SK-N-SH (cell line): ENCODE measurements at regions of chr11 and their contacts with region 1.

Region 1: GRCh38 chr11:62841361-62842184 is 2.2 kb upstream of the WDR74 start:
- DNase-seq: peak; percentile 87
- H3K4me3 ChIP-seq: peak overlapping the region; percentile 59 to 81
- H3K27ac ChIP-seq: peak overlapping the region; percentile 94 to 95
- H3K4me1 ChIP-seq: peaks cover 13 to 15% of the 10 kb centered on the region in 2 experiments; a peak in 2 of 4 replicates
- H3K27me3 ChIP-seq: no peaks in the 10 kb centered on the region
- CTCF ChIP-seq: no peak
- EP300 ChIP-seq: peak; percentile 72 to 76; a peak in 3 of 4 replicates
- RAD21 ChIP-seq: no peak

Region 2: DNA sequence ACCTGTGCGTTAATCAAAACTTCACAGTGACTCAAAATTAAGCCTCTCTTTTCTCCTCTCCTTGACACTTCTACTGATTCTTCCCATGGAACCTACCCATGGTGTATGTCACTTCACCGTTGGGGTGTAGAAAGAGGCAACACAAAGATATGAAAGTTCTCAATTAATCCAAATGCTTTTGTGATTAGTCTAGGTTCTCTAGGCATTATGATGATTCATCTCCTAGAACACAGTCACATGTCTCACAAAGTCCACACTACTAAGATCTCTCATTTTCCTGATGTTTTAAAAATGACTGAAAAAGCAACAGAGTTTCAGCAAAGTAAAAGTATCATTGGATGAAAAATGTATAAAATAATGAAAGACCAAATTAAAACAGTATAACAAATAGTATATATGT is 585.3 kb before region 1 on chr11:
- CTCF ChIA-PET with region 1: no interaction called
- POLR2A ChIA-PET with region 1: no interaction called
- DNase-seq: no peak
- H3K4me3 ChIP-seq: no peak overlapping the region
- H3K27ac ChIP-seq: no peak overlapping the region
- H3K4me1 ChIP-seq: no peaks in the 10 kb centered on the region
- H3K27me3 ChIP-seq: no peaks in the 10 kb centered on the region; the same call in 1 of the 2 replicates
- CTCF ChIP-seq: no peak
- EP300 ChIP-seq: no peak
- RAD21 ChIP-seq: no peak

Region 3: DNA sequence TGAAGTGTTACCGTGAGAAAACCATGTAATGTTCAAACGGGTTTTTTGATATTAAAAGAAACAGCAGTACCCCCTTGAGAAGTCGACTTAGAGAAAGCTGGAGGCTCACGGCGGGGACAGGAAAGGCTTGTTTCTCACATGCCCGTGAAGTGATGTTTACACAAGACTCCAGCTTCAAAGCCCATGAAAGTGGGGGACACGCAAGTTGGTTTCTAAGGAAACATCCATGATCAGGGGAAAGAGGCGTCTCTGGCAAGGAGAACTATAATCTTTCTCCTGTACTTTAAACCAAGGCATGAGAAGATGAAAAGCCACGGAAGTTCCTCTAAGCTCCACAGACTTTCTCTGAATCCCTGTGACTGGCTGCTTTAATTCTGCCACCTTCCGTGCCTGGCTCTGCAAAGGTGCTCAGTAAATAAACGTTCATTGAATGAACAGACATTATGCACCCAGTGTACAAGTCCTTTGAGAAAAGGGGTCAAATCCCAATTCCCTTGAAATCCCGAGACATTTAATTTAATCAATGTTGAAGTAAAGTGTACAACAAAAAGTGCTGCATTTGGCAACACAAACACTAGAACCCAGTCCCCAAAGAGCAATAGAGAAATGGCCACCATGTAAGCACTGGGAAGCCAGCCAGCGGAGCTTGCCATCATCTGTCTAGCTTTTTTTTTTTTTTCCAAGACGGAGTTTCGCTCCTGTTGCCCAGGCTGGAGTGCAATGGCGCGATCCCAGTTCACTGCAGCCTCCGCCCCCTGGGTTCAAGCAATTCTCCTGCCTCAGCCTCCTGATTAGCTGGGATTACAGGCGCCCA is 353.6 kb before region 1 on chr11:
- CTCF ChIA-PET with region 1: no interaction called
- POLR2A ChIA-PET with region 1: no interaction called
- DNase-seq: no peak
- H3K4me3 ChIP-seq: no peak overlapping the region
- H3K27ac ChIP-seq: no peak overlapping the region
- H3K4me1 ChIP-seq: no peaks in the 10 kb centered on the region
- H3K27me3 ChIP-seq: no peaks in the 10 kb centered on the region
- CTCF ChIP-seq: no peak
- EP300 ChIP-seq: no peak
- RAD21 ChIP-seq: no peak

Region 4: GRCh38 chr11:62591448-62592145 is 250.0 kb before region 1 on chr11 and contains the start of gene TUT1:
- CTCF ChIA-PET with region 1: no interaction called
- POLR2A ChIA-PET with region 1: interaction called, 13 read pairs
- DNase-seq: peak; percentile 83
- H3K4me3 ChIP-seq: peak within 1 kb of the TSS; percentile 77 to 78
- H3K27ac ChIP-seq: peak within 1 kb of the TSS; percentile 86 to 94
- H3K4me1 ChIP-seq: peaks cover 13 to 17% of the 10 kb centered on the region in 2 experiments; a peak in 3 of 4 replicates
- H3K27me3 ChIP-seq: no peaks in the 10 kb centered on the region
- CTCF ChIP-seq: no peak; the same call in 1 of the 2 replicates
- EP300 ChIP-seq: 0 out of 4 replicates have a peak, but pooled peaks of 1 of the 2 experiments have one; percentile 22
- RAD21 ChIP-seq: no peak
- polyA plus RNA-seq, gene TUT1: 27.3 and 30.0 TPM in 2 replicates

Region 5: DNA sequence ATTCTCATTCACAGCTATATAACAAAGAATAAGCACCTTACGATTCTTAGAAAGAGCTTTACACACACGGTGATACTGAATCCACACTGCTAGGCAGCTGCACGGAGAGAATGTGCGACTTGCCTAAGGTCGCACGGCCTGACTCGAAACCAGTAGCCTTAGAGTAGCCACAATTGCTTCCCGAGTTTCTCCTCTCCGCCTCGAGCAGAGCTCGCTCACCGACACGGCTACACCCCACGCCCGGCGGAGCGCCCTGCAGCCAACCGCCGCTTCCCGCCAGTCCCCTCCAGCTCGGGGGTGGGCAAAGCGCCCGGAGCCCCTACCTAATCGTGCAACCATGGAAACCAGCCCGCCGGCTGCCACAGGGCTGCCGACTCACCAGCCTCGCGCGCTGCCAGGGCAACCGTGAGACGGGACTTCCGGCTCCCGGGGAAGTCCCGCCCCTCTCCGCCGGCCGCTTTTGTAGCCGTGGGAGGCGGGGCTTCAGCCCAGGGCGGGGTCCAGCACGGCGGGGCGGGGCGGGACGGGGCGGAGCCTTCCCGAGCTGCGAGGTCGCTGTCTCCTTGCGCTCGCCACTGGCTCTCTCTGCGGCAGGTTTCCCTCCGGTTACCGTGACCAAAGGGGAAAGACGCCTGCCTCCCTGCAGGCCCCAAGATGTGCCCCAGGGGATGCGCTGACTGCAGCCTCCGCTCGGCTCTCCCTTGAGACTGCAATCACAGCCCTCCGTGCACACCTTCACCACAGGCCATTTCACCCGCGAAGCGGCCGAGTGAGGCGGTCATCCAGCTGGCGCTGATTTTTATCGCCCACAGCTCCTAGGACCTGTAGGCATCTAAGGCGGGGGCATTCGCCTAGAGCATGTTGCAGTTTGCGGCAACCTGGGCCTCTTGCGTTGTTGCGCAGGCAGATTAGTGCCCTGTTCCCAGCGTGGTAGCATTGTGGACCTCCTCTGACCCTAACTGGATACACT is 135.4 kb before region 1 on chr11:
- CTCF ChIA-PET with region 1: no interaction called
- POLR2A ChIA-PET with region 1: interaction called, 10 read pairs
- DNase-seq: peak; percentile 97
- H3K4me3 ChIP-seq: peak overlapping the region; percentile 67 to 70
- H3K27ac ChIP-seq: peak overlapping the region; percentile 84 to 93
- H3K4me1 ChIP-seq: peaks cover 22 to 45% of the 10 kb centered on the region in 2 experiments; a peak in 3 of 4 replicates
- H3K27me3 ChIP-seq: no peaks in the 10 kb centered on the region
- CTCF ChIP-seq: no peak
- EP300 ChIP-seq: no peak
- RAD21 ChIP-seq: no peak

Region 6: GRCh38 chr11:62753736-62754603 is 87.6 kb before region 1 on chr11 and contains the start of gene ZBTB3:
- CTCF ChIA-PET with region 1: no interaction called
- POLR2A ChIA-PET with region 1: interaction called, 16 read pairs
- DNase-seq: peak; percentile 90
- H3K4me3 ChIP-seq: peak within 1 kb of the TSS; percentile 66 to 69
- H3K27ac ChIP-seq: peak within 1 kb of the TSS; percentile 85 to 95
- H3K4me1 ChIP-seq: peaks cover 6 to 11% of the 10 kb centered on the region in 2 experiments; a peak in 3 of 4 replicates
- H3K27me3 ChIP-seq: no peaks in the 10 kb centered on the region
- CTCF ChIP-seq: no peak
- EP300 ChIP-seq: no peak
- RAD21 ChIP-seq: no peak
- polyA plus RNA-seq, gene ZBTB3: 2.1 and 3.3 TPM in 2 replicates

Region 7: DNA sequence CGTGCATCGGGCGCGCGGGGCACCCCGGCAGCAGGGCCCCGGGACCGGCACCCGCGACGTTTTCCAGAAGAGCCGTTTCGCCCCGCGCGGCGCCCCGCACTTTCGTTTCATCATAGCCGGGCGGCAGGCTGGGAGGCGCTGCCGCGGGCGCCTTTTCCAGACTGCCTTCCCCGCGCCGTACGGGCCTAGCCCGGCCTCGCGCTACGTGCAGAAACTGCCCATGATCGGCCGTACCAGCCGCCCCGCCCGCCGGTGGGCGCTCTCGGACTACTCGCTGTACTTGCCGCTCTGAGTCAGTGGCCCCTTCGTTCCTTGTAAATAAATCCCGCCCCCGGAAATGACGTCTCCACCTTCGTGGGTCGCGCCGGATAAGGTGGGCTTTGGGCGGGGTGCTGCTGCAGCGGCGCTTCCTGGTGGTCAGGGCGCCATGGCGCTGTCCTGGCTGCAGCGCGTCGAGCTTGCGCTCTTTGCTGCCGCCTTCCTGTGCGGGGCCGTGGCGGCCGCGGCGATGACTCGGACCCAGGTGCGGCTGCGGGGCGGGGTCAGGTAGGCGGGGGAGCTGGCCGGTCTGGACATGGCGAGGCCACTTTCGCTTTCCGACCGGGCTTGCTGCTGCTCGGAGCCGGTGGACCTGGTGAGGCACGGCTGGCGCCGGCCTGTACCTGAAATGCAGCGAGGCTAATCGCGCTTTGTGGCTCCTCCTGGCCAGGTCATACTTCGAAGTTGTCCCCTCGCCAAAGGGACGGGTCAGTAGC is 54.4 kb before region 1 on chr11 and contains the start of gene TMEM179B:
- CTCF ChIA-PET with region 1: interaction called, 18 read pairs
- POLR2A ChIA-PET with region 1: interaction called, 35 read pairs
- DNase-seq: peak; percentile 97
- H3K4me3 ChIP-seq: peak within 1 kb of the TSS; percentile 76 to 87
- H3K27ac ChIP-seq: peak within 1 kb of the TSS; percentile 65 to 89
- H3K4me1 ChIP-seq: peaks cover 6 to 26% of the 10 kb centered on the region in 2 experiments
- H3K27me3 ChIP-seq: no peaks in the 10 kb centered on the region
- CTCF ChIP-seq: peak; percentile 49
- EP300 ChIP-seq: peak in 1 of 2 experiments; percentile 15; a peak in 1 of 4 replicates
- RAD21 ChIP-seq: peak; percentile 27; the same call in 1 of the 2 replicates
- polyA plus RNA-seq, gene TMEM179B: 69.6 and 73.3 TPM in 2 replicates

Region 8: DNA sequence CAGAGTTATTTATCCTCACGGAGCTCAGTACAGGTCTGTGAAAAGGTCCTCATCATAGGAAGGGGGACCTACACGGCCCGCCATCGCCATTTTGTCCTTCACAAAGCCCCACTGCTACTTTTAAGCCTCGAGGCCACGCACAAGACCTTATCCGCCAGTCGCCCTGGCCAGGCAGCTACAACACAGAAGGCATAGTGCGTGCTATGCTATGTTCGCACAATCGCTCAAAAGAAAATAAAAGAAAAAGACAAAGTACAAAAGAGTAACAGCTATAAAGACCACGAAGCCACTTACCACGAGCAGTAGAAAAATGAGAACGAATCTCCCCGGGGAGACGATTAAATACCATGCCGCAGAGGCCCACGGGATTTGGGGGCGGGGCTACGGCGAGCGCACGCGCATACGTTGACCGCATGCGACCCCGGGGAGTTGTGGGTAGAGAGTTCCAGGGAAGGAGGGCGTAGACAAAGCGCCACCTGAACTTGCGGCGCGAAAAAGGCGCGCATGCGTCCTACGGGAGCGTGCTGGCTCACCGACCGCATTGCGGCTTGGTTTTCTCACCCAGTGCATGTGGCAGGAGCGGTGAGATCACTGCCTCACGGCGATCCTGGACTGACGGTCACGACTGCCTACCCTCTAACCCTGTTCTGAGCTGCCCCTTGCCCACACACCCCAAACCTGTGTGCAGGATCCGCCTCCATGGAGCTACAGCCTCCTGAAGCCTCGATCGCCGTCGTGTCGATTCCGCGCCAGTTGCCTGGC is 14.2 kb after region 1 on chr11:
- CTCF ChIA-PET with region 1: interaction called, 5 read pairs
- POLR2A ChIA-PET with region 1: interaction called, 146 read pairs
- DNase-seq: peak; percentile 93
- H3K4me3 ChIP-seq: peak overlapping the region; percentile 90 to 94
- H3K27ac ChIP-seq: peak overlapping the region; percentile 61 to 93
- H3K4me1 ChIP-seq: peaks cover 14 to 16% of the 10 kb centered on the region in 2 experiments; a peak in 3 of 4 replicates
- H3K27me3 ChIP-seq: no peaks in the 10 kb centered on the region
- CTCF ChIP-seq: no peak
- EP300 ChIP-seq: no peak
- RAD21 ChIP-seq: no peak